Heart left ventricle (tissue), 16 donors: ENCODE measurements at regions of chr21 and their contacts with region 1.

Region 1: DNA sequence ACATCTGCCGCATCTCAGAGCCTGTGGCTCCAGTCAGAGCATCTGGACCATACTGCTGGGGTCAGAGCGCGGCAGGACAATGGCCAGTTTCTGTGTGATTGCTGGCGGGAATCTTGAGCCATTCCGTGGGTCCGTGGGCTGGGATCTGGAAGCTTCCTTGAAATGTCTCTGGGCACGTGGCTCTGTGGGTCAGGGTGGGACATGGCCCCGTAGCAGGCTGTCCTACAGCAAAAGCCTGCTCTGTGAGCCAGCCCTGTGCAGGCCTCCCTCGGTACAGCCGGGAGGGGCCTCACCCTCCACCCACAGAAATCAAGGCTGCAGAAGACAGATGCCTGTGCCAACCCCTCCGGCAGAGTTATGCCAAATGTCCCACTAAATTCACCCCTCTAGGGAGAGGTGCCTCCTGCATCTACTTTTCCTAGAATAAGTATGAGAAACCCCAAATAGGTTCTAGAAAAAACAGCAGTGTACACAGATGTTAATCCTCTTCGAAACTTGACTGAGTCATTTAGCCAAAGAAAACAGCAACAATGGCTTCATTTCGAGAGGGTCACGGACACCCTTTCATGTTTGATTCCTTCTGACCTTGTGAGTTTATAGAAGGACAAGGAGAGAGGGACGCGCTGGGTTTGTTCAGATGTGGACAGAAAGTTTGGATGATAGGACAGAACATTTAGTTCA is 27.8 kb downstream of the COL18A1 start:
- DNase-seq: peak in 2 of 5 donors; percentile 65 to 66
- ATAC-seq: peak; percentile 50 to 72 (median 60)
- H3K4me3 ChIP-seq: no peak overlapping the region
- H3K27ac ChIP-seq: peak overlapping the region in 9 of 12 donors; percentile 13 to 54 (median 39)
- H3K4me1 ChIP-seq: peaks cover 0 to 57% (median 28%) of the 10 kb centered on the region in 12 donors
- H3K27me3 ChIP-seq: no peaks in the 10 kb centered on the region
- CTCF ChIP-seq: no peak
- POLR2A ChIP-seq: no peak

Region 2: DNA sequence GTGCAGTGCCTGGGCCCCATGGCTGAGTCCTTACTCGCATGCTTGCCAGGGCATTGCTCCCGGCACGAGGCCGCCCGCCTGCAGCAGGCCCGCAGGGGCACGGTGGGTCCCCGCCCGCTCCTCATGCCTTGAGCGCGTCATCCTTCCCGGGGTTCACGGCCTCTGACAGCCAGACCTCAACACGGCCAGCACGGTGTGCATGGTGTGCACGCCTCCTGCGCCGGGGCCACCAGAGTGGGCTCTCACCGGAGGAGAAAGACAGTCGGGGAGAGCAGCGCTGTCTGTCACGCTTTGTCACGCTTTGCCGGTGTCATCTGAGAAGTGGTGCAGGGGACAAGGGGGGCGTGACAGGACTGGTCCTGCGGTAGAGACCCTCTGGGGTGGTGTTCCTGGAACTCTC is 39.7 kb before region 1 on chr21:
- intact Hi-C with region 1: loop called in 5 of 10 experiments (anchors 5 to 10 kb)
- DNase-seq: peak in 4 of 5 donors; percentile 13 to 58 (median 20)
- ATAC-seq: no peak
- H3K4me3 ChIP-seq: no peak overlapping the region
- H3K27ac ChIP-seq: no peak overlapping the region
- H3K4me1 ChIP-seq: peaks cover 0 to 3% (median 0%) of the 10 kb centered on the region in 12 donors
- H3K27me3 ChIP-seq: no peaks in the 10 kb centered on the region
- CTCF ChIP-seq: no peak
- POLR2A ChIP-seq: no peak

Region 3: GRCh38 chr21:45404730-45405270 is 27.9 kb before region 1 on chr21 and contains the start of gene COL18A1:
- intact Hi-C with region 1: loop called in 3 of 10 experiments (anchors 2 to 5 kb)
- DNase-seq: peak; percentile 75 to 87 (median 80)
- ATAC-seq: peak in 3 of 4 donors; percentile 30 to 59 (median 56)
- H3K4me3 ChIP-seq: peak within 1 kb of the TSS; percentile 43 to 97 (median 69)
- H3K27ac ChIP-seq: peak within 1 kb of the TSS; percentile 57 to 89 (median 80)
- H3K4me1 ChIP-seq: peaks cover 0 to 57% (median 41%) of the 10 kb centered on the region in 12 donors
- H3K27me3 ChIP-seq: peaks cover 0 to 24% (median 0%) of the 10 kb centered on the region in 9 donors
- CTCF ChIP-seq: no peak
- POLR2A ChIP-seq: no peak
- total RNA-seq, gene COL18A1: 31.7 to 109 (median 59.0) TPM